ENCODE measurements at regions of chr20 and their contacts with region 1.

Region 1: GRCh38 chr20:13898011-13898612 is 92.3 kb downstream of the SEL1L2 start:
- DNase-seq: peak; percentile 53
- ATAC-seq: peak; percentile 97
- H3K4me3 ChIP-seq: no peak overlapping the region
- H3K27ac ChIP-seq: no peak overlapping the region
- H3K4me1 ChIP-seq: no peaks in the 10 kb centered on the region
- H3K27me3 ChIP-seq: no peaks in the 10 kb centered on the region
- CTCF ChIP-seq: peak; percentile 40; the same call in 1 of the 2 replicates
- EP300 ChIP-seq: no peak
- POLR2A ChIP-seq: no peak
- RAD21 ChIP-seq: 0 out of 2 replicates have a peak, but pooled peaks have one; percentile 23

Region 2: GRCh38 chr20:13953227-13953626 is 55.1 kb after region 1 on chr20:
- CTCF ChIA-PET with region 1: no interaction called
- POLR2A ChIA-PET with region 1: no interaction called
- in situ Hi-C with region 1: no loop called
- intact Hi-C with region 1: loop called (anchors 2 kb)
- DNase-seq: peak; percentile 26
- ATAC-seq: peak; percentile 70
- H3K4me3 ChIP-seq: no peak overlapping the region
- H3K27ac ChIP-seq: no peak overlapping the region
- H3K4me1 ChIP-seq: no peaks in the 10 kb centered on the region
- H3K27me3 ChIP-seq: no peaks in the 10 kb centered on the region
- CTCF ChIP-seq: peak; percentile 47
- EP300 ChIP-seq: no peak
- POLR2A ChIP-seq: no peak
- RAD21 ChIP-seq: no peak